WTC11 (cell line): ENCODE measurements at regions of chr21 and their contacts with region 1.

Region 1: GRCh38 chr21:41283211-41283818 is 33.3 kb upstream of the FAM3B start:
- DNase-seq: peak; percentile 28
- ATAC-seq: peak; percentile 90
- H3K4me3 Mint-ChIP-seq: no peak overlapping the region
- H3K27ac Mint-ChIP-seq: no peak overlapping the region
- H3K4me1 Mint-ChIP-seq: peaks cover 11% of the 10 kb centered on the region
- H3K27me3 Mint-ChIP-seq: no peaks in the 10 kb centered on the region
- CTCF ChIP-seq: peak; percentile 53

Region 2: DNA sequence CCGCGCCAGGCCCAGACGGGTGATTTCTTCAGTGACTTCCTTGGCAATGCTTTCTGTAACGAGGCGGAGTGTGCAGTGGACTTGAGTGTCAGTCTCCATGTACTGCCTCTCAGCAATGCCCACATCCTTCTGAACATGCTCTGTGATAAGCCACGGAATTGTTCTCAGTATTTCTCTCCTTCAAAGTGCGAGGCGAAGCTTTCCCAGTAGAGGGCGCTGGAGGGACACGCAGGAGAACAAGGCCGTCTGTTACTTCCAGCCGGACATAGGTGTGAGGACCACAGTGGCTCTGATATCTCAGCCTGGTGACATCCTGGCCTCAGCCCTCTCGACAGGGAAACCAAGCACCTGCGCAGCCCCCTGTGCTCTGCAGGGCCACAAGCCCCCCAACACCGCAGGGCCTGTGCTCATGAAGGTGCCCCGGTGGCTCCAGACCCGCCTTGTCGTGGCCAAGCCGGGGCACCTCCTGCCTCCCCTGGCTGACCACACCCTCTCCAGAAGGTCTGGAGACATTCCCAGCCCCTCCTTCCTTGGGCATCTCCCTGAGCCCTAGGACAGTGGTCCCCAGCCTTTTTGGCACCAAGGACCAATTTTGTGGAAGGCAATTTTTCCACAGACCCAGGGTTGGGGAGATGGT is 161.4 kb before region 1 on chr21:
- CTCF ChIA-PET with region 1: interaction called, 10 read pairs
- POLR2A ChIA-PET with region 1: no interaction called
- DNase-seq: peak; percentile 90
- ATAC-seq: peak; percentile 93
- H3K4me3 Mint-ChIP-seq: no peak overlapping the region
- H3K27ac Mint-ChIP-seq: no peak overlapping the region
- H3K4me1 Mint-ChIP-seq: peaks cover 3% of the 10 kb centered on the region; the same call in 1 of the 2 replicates
- H3K27me3 Mint-ChIP-seq: peaks cover 5% of the 10 kb centered on the region; the same call in 1 of the 2 replicates
- CTCF ChIP-seq: peak; percentile 82

Region 3: DNA sequence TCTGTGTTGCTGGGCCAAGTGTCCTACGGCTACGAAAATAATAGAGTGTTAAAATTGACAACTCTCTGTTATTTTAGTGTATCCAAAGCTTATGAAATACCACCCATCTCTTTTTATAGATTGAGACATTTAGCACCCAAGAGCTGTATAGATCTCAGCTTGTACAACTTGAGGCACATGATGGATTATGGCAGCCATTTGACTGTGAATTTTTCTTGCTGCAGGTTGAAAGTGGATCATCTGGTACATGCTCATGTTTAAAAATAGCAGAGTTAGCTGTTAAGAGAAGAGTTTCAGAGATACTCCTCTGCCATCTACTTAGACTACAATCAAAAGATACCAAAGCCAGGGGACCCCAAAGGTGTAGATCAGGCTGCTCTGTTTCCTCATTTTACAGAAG is 16.0 kb before region 1 on chr21:
- CTCF ChIA-PET with region 1: no interaction called
- POLR2A ChIA-PET with region 1: no interaction called
- DNase-seq: no peak
- ATAC-seq: no peak
- H3K4me3 Mint-ChIP-seq: no peak overlapping the region
- H3K27ac Mint-ChIP-seq: no peak overlapping the region
- H3K4me1 Mint-ChIP-seq: no peaks in the 10 kb centered on the region
- H3K27me3 Mint-ChIP-seq: no peaks in the 10 kb centered on the region; the same call in 1 of the 2 replicates
- CTCF ChIP-seq: no peak

Region 4: DNA sequence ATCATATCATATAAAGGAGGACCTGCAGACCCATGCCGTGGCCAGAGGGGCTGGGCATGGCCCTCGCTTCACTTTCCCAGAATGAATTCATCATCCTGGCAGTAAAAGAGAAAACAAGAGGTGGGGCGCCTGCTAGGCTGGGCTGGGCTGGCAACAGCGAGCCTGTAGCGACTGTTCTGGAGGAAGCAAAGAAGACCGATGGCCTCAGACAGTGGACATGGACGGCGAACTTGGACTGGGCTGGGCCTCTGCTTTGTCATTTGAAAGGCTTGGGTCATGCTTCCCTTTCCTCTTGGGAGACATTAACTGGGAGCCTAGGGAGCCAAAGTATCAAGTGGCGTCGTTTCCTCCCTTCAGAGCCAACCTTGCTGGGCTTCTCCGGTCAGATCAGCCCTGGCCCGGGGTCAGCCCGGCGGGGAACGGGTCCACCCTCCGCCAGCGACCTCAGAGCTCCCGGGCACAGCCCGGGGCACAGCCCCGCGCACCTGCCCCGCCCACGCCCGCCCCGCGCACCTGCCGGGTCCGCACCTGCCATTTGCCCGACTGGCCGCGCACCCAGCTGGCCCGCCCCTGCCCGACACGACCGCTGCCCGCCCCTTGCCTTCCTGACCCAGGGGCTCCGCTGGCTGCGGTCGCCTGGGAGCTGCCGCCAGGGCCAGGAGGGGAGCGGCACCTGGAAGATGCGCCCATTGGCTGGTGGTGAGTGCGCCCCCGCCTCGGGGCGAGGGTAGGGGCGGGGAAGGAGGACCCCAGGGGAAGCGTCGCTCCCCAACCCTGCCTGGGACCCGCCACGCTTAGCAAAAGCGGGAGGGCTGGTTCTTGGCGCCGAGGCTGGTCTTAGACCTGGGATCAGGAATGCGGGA is 33.1 kb after region 1 on chr21 and contains the start of gene FAM3B:
- CTCF ChIA-PET with region 1: interaction called, 23 read pairs
- POLR2A ChIA-PET with region 1: interaction called, 3 read pairs
- DNase-seq: peak; percentile 80
- ATAC-seq: peak; percentile 93
- H3K4me3 Mint-ChIP-seq: peak within 1 kb of the TSS; percentile 78
- H3K27ac Mint-ChIP-seq: peak within 1 kb of the TSS; percentile 30
- H3K4me1 Mint-ChIP-seq: peaks cover 5% of the 10 kb centered on the region
- H3K27me3 Mint-ChIP-seq: peaks cover 24% of the 10 kb centered on the region
- CTCF ChIP-seq: no peak
- total RNA-seq, gene FAM3B: 1.4 to 3.6 TPM (median 3.0 TPM) in 3 replicates

Region 5: GRCh38 chr21:41369105-41369919 is 86.0 kb after region 1 on chr21:
- CTCF ChIA-PET with region 1: interaction called, 61 read pairs
- POLR2A ChIA-PET with region 1: no interaction called
- DNase-seq: peak; percentile 64
- ATAC-seq: peak; percentile 92
- H3K4me3 Mint-ChIP-seq: peak overlapping the region; percentile 68
- H3K27ac Mint-ChIP-seq: no peak overlapping the region
- H3K4me1 Mint-ChIP-seq: peaks cover 12% of the 10 kb centered on the region
- H3K27me3 Mint-ChIP-seq: no peaks in the 10 kb centered on the region; the same call in 1 of the 2 replicates
- CTCF ChIP-seq: no peak

Region 6: GRCh38 chr21:41411449-41412089 is 128.3 kb after region 1 on chr21:
- CTCF ChIA-PET with region 1: interaction called, 28 read pairs
- POLR2A ChIA-PET with region 1: no interaction called
- DNase-seq: no peak
- ATAC-seq: peak; percentile 79
- H3K4me3 Mint-ChIP-seq: no peak overlapping the region
- H3K27ac Mint-ChIP-seq: no peak overlapping the region
- H3K4me1 Mint-ChIP-seq: no peaks in the 10 kb centered on the region
- H3K27me3 Mint-ChIP-seq: no peaks in the 10 kb centered on the region
- CTCF ChIP-seq: no peak

Region 7: GRCh38 chr21:41601573-41602368 is 318.5 kb after region 1 on chr21:
- CTCF ChIA-PET with region 1: interaction called, 13 read pairs
- POLR2A ChIA-PET with region 1: no interaction called
- DNase-seq: no peak
- ATAC-seq: no peak
- H3K4me3 Mint-ChIP-seq: no peak overlapping the region
- H3K27ac Mint-ChIP-seq: no peak overlapping the region
- H3K4me1 Mint-ChIP-seq: peaks cover 14% of the 10 kb centered on the region
- H3K27me3 Mint-ChIP-seq: peaks cover 1% of the 10 kb centered on the region
- CTCF ChIP-seq: no peak